HEK293 (cell line): ENCODE measurements at regions of chr3 and their contacts with region 1.

Region 1: DNA sequence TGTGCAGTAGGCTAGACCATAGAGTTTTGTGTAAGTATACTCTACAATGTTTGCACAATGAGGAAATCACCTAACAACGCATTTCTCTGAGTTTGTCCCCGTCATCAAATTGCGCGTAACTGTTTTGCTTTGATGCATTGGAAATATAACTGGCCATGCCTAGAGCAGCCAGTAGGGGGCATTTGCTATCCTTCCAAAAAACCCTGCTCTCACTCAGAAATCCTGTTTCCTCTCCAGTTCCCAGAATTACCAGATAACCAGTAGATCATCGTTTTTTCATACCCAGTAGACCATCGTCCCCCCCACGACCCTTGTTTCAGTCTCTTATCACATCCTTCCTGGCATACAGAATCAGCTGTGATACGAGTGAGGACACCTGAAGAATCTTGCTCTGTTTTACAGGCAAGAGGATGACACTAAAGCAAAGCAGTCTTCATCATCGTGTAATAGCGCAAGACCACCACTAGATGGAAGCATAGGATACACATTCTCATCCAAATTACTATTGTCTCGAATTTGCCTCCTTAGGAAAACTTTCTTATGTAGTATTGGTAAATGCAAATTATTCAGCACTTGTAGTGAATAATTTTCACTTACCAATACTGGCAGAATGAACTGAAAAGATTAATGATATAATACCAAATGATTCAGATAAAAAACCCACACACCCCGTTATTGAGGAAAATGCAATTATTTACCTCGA is 4.4 kb upstream of the GABRR3 start:
- H3K4me3 ChIP-seq: peak overlapping the region; percentile 44
- H3K27ac ChIP-seq: no peak overlapping the region
- H3K4me1 ChIP-seq: no peaks in the 10 kb centered on the region
- CTCF ChIP-seq: peak; percentile 72

Region 2: GRCh38 chr3:98056035-98056434 is 16.6 kb after region 1 on chr3:
- CTCF ChIA-PET with region 1: interaction called, 13 read pairs
- POLR2A ChIA-PET with region 1: no interaction called
- H3K4me3 ChIP-seq: no peak overlapping the region
- H3K27ac ChIP-seq: no peak overlapping the region
- H3K4me1 ChIP-seq: no peaks in the 10 kb centered on the region
- CTCF ChIP-seq: no peak

Region 3: GRCh38 chr3:98329392-98330124 is 290.1 kb after region 1 on chr3:
- CTCF ChIA-PET with region 1: interaction called, 51 read pairs
- POLR2A ChIA-PET with region 1: no interaction called
- H3K4me3 ChIP-seq: no peak overlapping the region
- H3K27ac ChIP-seq: no peak overlapping the region
- H3K4me1 ChIP-seq: no peaks in the 10 kb centered on the region
- CTCF ChIP-seq: peak; percentile 63

Region 4: DNA sequence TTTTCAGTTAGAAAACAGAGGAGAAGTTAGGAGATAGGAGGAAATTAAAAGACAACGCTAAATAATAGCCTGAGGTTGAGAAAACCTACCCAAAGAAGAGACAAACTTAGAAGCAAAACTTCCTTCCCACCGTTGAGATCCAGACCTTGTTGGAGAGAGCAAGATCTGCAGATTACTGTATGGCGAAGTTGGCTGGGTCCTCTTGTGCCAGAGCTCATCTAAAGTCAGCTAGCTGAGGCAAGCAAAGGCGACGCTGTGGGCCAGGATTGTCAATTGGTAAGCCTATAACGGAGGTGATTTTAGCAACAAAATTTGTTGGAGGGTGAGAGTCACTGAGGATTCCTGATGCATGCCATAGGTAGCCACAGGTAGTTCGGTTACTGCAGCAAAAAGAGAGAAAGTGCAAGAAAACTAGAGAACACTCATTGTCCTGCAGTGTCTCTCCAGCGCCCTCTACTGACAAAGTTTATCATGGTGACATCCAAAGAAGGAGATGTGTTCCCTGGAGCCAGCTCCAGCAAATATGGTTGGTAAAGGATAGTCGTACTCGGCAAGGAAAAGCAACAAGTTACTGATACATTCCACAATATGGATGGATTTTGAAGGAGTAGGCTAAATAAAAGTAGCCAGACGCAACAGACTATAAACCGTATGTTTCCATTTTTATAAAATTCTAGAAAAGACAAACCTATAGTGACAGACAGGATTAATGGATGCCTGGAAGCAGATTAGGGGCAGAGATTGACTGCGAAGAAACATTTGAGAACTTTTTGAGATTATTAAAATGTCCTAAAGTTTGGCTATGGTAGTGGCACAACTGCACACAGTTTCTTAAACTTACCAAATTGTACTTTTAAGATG is 304.4 kb after region 1 on chr3:
- CTCF ChIA-PET with region 1: interaction called, 11 read pairs
- POLR2A ChIA-PET with region 1: no interaction called
- H3K4me3 ChIP-seq: no peak overlapping the region
- H3K27ac ChIP-seq: no peak overlapping the region
- H3K4me1 ChIP-seq: no peaks in the 10 kb centered on the region
- CTCF ChIP-seq: no peak; the same call in 1 of the 2 replicates